ENCODE measurements at regions of chr13 and their contacts with region 1.

Region 1: GRCh38 chr13:43787997-43788396 is 1.2 kb upstream of the ENOX1 start:
- DNase-seq: peak; percentile 49
- H3K4me3 ChIP-seq: peak overlapping the region; percentile 72 to 73; a peak in 2 of 4 replicates
- H3K27ac ChIP-seq: no peak overlapping the region
- H3K4me1 ChIP-seq: peaks cover 0 to 23% of the 10 kb centered on the region in 2 experiments; a peak in 3 of 4 replicates
- H3K27me3 ChIP-seq: no peaks in the 10 kb centered on the region
- CTCF ChIP-seq: peak; percentile 59
- EP300 ChIP-seq: no peak
- RAD21 ChIP-seq: peak; percentile 51

Region 2: DNA sequence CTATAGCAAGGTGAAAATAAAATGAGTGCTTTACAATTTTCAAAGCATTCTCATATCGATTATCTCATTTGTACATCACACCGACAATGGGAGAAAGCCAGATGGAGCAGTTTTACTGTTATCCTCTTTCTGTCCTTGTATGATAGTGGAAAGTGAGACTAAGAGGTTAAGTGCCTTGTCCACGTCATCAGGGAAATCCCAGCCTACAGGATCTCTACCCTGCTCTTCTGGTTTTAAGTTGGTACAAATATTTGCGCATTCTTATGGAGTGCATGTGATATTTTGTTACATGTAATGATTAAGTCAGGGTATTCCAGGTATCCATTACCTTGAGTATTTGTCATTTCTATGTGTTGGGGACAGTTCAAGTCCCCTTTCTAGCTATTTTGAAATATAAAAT is 11.2 kb after region 1 on chr13:
- CTCF ChIA-PET with region 1: interaction called, 28 read pairs
- POLR2A ChIA-PET with region 1: no interaction called
- DNase-seq: no peak
- H3K4me3 ChIP-seq: no peak overlapping the region
- H3K27ac ChIP-seq: no peak overlapping the region
- H3K4me1 ChIP-seq: peaks cover 0 to 2% of the 10 kb centered on the region in 2 experiments; a peak in 2 of 4 replicates
- H3K27me3 ChIP-seq: no peaks in the 10 kb centered on the region
- CTCF ChIP-seq: no peak
- EP300 ChIP-seq: no peak
- RAD21 ChIP-seq: no peak

Region 3: DNA sequence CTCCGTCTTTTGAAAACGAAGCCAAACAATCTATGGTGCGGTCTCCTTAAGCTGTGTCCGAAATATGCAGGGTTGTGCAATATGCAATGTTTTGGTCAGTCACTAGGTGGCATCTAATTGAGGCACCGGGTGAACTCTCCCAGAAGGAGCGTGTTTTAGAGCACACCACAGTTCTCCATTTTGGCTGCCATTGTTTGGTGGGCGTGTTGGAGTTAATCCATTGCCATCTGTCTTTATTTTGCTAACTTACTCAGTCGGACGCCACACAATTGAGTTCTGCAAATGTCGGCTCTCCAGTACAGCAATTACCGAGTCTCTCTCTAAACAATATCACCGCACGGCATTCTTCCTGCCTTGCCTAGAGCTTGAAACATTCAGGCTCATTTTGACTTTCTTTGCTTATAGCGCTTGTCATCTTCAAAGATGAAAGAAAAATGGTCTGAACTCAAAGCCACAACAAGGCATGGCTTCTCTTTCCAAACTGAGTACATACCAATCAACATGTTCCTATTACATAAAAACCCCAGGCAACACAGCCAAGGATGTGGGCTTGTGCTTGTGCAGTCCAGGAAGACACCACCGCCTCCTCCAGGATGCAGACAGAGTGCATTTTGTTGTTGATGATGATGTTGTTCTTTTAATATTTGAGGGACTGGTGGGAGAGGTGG is 403.6 kb after region 1 on chr13:
- CTCF ChIA-PET with region 1: no interaction called
- POLR2A ChIA-PET with region 1: no interaction called
- DNase-seq: peak; percentile 58
- H3K4me3 ChIP-seq: no peak overlapping the region
- H3K27ac ChIP-seq: no peak overlapping the region
- H3K4me1 ChIP-seq: no peaks in the 10 kb centered on the region
- H3K27me3 ChIP-seq: no peaks in the 10 kb centered on the region; the same call in 1 of the 2 replicates
- CTCF ChIP-seq: peak; percentile 65
- EP300 ChIP-seq: no peak
- RAD21 ChIP-seq: peak; percentile 77